Heart left ventricle (tissue), 16 donors: ENCODE measurements at regions of chr6 and their contacts with region 1.

Region 1: GRCh38 chr6:134619789-134620188 is 301.9 kb upstream of the SGK1 start:
- DNase-seq: no peak
- ATAC-seq: peak in 3 of 4 donors; percentile 67 to 89 (median 79)
- H3K4me3 ChIP-seq: no peak overlapping the region
- H3K27ac ChIP-seq: no peak overlapping the region
- H3K4me1 ChIP-seq: peaks cover 0 to 6% (median 0%) of the 10 kb centered on the region in 12 donors
- H3K27me3 ChIP-seq: no peaks in the 10 kb centered on the region
- CTCF ChIP-seq: no peak
- POLR2A ChIP-seq: no peak

Region 2: GRCh38 chr6:134564705-134565104 is 55.1 kb before region 1 on chr6:
- intact Hi-C with region 1: loop called in 1 of 10 experiments (anchors 10 kb)
- DNase-seq: no peak
- ATAC-seq: no peak
- H3K4me3 ChIP-seq: no peak overlapping the region
- H3K27ac ChIP-seq: no peak overlapping the region
- H3K4me1 ChIP-seq: no peaks in the 10 kb centered on the region
- H3K27me3 ChIP-seq: no peaks in the 10 kb centered on the region
- CTCF ChIP-seq: no peak
- POLR2A ChIP-seq: no peak

Region 3: DNA sequence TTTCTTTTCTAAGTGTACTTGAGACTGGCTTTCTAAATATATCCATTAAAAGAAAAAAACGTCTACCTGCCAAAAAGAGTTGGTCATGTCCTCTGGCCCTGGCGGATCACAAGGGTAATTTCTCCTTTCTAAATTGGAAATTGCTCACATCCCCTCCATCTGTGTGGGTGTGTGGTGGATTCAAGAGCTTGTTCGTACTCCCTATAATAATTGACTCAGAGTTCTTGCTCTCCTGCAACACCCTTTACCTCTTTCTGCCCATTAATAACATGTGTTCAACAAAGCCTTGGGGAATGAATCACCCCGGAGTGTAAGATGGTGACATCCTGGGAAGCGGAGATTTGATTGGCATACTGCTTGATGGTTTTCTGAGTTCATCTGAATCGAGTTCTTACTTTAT is 66.3 kb after region 1 on chr6:
- intact Hi-C with region 1: loop called in 1 of 10 experiments (anchors 2 kb)
- DNase-seq: no peak
- ATAC-seq: no peak
- H3K4me3 ChIP-seq: no peak overlapping the region
- H3K27ac ChIP-seq: peak overlapping the region in 3 of 12 donors; percentile 0 to 37 (median 11)
- H3K4me1 ChIP-seq: peaks cover 0 to 11% (median 5%) of the 10 kb centered on the region in 12 donors
- H3K27me3 ChIP-seq: no peaks in the 10 kb centered on the region
- CTCF ChIP-seq: no peak
- POLR2A ChIP-seq: no peak